ENCODE measurements at regions of chr3 and their contacts with region 1.

Region 1: DNA sequence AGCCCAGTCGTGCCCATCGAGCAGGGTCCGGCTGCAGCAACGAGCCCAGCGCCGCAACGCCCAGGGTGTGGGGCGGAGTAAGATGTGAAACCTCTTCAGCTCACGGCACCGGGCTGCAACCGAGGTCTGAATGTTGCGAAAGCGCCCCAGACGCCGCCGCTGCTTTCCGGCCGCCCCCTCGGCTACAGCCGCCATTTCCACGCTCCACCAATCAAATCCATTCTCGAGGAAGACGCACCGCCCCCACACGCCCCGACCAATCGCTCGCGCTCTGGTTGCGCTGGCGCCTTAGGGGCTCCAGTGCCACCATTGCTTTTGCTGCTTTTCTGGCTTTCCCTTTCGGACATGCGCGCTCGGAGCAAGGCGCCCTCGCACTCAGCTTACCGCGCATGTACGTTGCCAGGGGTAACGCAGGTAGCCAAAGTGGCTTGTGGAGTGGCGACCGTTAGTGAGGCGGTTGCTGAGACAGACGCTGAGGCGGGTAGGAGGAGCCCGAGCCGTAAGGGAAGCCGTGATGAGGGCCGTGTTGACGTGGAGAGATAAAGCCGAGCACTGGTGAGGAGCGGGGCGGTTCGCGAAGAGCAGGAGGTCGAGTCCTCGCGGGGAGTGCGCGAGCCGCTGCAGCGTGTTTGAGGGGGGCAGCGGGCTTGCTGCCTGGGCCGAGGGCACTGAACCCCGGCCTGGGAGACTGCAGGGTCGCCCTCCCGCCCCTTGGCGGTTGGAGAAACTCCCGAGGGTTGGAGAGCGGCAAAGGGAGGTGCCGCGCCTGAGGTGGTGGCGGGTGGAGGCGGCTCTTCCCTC is at the starts of genes IFT122 and MBD4:
- DNase-seq: peak; percentile 95 to 100 (median 99)
- ATAC-seq: peak; percentile 91
- H3K4me3 ChIP-seq: peak within 1 kb of the TSS; percentile 99
- H3K4me3 Mint-ChIP-seq: peak within 1 kb of the TSS; percentile 85 to 98 (median 94)
- H3K27ac ChIP-seq: peak within 1 kb of the TSS; percentile 95
- H3K27ac Mint-ChIP-seq: peak within 1 kb of the TSS; percentile 93 to 99 (median 97)
- H3K4me1 ChIP-seq: peaks cover 19 to 38% of the 10 kb centered on the region in 2 donors
- H3K4me1 Mint-ChIP-seq: peaks cover 52 to 88% (median 73%) of the 10 kb centered on the region in 7 donors
- H3K27me3 ChIP-seq: no peaks in the 10 kb centered on the region
- H3K27me3 Mint-ChIP-seq: no peaks in the 10 kb centered on the region
- total RNA-seq, gene IFT122: 16.6 to 25.2 (median 18.8) TPM
- total RNA-seq, gene MBD4: 37.9 to 56.6 (median 53.1) TPM

Region 2: DNA sequence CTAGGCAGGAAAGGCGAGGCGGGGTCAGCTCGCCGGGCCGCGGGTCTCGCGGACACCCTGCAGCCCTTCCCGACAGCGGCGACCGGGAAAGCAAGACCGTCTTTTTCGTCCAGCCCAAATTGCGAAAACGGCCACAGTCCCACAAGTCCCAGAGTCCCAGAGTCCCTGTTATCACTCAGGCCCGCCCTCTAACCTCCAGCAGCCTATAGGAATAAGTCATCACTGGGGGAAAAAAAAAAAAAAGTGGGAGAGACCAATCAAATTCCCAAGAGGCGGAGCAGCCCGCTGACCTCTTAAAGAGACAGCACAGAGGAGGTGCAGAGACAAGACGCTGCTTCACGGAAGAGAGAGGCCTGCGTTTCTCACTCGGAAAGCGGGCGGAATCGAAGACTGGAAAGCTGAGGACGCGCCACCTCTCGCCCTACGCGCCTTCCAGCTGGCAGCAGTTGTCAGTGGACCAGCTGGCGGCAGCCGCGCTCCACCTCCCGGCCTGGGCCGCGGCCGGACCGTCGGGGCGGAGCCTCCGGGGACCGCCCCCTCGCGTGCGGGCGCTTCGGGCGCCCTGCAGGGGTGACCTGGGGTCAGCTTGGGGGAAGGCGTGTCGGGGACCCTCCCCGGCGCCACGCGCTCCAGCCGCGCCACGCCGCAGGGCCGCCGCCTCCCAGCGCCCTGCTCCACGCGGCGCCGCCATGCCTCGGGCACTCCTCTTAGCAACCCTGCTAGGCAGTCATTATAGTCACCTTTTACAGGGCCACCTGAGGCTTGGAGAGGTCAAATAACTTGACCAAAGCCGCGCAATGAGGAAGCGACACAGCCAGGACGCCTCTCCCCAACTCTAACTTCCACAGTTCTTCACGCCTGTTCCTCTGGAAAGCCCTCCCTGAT is 1849.2 kb before region 1 on chr3 and contains the start of gene TPRA1:
- CTCF ChIA-PET with region 1: no interaction called
- POLR2A ChIA-PET with region 1: no interaction called
- intact Hi-C with region 1: loop called in 1 of 2 experiments (anchors 10 kb)
- DNase-seq: peak; percentile 58 to 90 (median 85)
- ATAC-seq: peak; percentile 90
- H3K4me3 ChIP-seq: peak within 1 kb of the TSS; percentile 91
- H3K4me3 Mint-ChIP-seq: peak within 1 kb of the TSS; percentile 86 to 99 (median 96)
- H3K27ac ChIP-seq: peak within 1 kb of the TSS; percentile 80
- H3K27ac Mint-ChIP-seq: peak within 1 kb of the TSS; percentile 86 to 96 (median 94)
- H3K4me1 ChIP-seq: peaks cover 11 to 12% of the 10 kb centered on the region in 2 donors
- H3K4me1 Mint-ChIP-seq: peaks cover 14 to 51% (median 43%) of the 10 kb centered on the region in 7 donors
- H3K27me3 ChIP-seq: no peaks in the 10 kb centered on the region
- H3K27me3 Mint-ChIP-seq: no peaks in the 10 kb centered on the region
- total RNA-seq, gene TPRA1: 13.6 to 30.6 (median 24.5) TPM

Region 3: DNA sequence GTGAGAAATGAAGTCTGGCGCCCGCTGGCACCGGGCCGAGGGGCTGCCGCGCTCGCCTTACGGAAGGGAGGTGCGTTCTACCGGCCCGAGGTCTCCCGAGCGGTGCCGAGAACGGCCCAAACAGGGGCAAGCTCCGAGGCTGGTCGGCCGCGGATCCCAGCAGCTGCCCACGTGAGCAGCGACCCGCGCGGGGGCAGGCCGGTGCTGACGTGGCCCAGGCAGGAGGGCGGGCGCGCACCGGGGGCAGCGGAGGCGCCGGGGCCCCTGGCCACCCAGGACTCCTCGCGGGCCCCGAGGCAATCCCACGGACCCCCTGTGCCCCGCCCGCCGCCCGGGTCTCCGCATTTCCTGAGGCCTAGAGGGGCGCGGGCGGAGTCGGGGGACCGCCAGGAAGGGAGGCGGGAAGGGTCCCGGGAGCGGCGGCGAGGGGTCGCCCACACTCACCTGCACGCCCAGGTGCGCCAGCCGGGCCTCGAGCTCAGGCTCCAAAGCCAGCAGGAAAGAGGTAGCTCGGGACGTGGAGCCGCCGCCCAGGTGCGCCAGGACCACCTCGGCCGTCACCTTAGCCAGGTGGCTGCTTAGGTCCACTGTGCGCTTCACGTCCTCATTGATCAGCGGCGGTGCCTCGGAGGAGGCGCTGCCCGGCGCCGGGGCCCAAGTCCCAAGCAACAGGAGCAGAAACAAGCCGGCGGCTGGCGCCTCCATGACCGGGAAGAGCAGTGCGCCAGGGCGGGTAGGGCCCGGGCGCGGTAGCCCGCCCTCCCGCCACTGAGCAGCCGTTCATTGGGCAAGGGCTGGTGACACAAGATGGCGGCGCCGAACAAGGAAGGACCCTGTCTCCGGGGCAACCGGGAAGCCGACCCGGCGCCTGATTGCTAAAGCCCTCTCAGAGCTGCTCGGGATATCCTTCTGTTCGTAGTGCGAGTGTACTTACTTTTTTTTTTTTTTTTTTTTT is 789.6 kb before region 1 on chr3 and contains the start of gene RPN1:
- CTCF ChIA-PET with region 1: no interaction called
- POLR2A ChIA-PET with region 1: no interaction called
- intact Hi-C with region 1: loop called in 1 of 2 experiments (anchors 1 kb)
- DNase-seq: peak; percentile 81 to 98 (median 97)
- ATAC-seq: peak; percentile 98
- H3K4me3 ChIP-seq: peak within 1 kb of the TSS; percentile 94
- H3K4me3 Mint-ChIP-seq: peak within 1 kb of the TSS; percentile 83 to 92 (median 90)
- H3K27ac ChIP-seq: peak within 1 kb of the TSS; percentile 99
- H3K27ac Mint-ChIP-seq: peak within 1 kb of the TSS; percentile 73 to 94 (median 92)
- H3K4me1 ChIP-seq: peaks cover 12 to 17% of the 10 kb centered on the region in 2 donors
- H3K4me1 Mint-ChIP-seq: peaks cover 25 to 43% (median 37%) of the 10 kb centered on the region in 7 donors
- H3K27me3 ChIP-seq: no peaks in the 10 kb centered on the region
- H3K27me3 Mint-ChIP-seq: no peaks in the 10 kb centered on the region
- total RNA-seq, gene RPN1: 76.7 to 203 (median 88.5) TPM

Region 4: GRCh38 chr3:128879125-128879969 is 560.7 kb before region 1 on chr3 and contains the start of gene ACAD9:
- CTCF ChIA-PET with region 1: no interaction called
- POLR2A ChIA-PET with region 1: interaction called, 3 read pairs
- intact Hi-C with region 1: loop called (anchors 1 kb)
- DNase-seq: peak; percentile 94 to 100 (median 96)
- ATAC-seq: peak; percentile 95
- H3K4me3 ChIP-seq: peak within 1 kb of the TSS; percentile 74
- H3K4me3 Mint-ChIP-seq: peak within 1 kb of the TSS; percentile 80 to 98 (median 89)
- H3K27ac ChIP-seq: peak within 1 kb of the TSS; percentile 97
- H3K27ac Mint-ChIP-seq: peak within 1 kb of the TSS; percentile 92 to 98 (median 97)
- H3K4me1 ChIP-seq: peaks cover 19 to 43% of the 10 kb centered on the region in 2 donors
- H3K4me1 Mint-ChIP-seq: peaks cover 40 to 83% (median 77%) of the 10 kb centered on the region in 7 donors
- H3K27me3 ChIP-seq: no peaks in the 10 kb centered on the region
- H3K27me3 Mint-ChIP-seq: peaks cover 0 to 6% (median 0%) of the 10 kb centered on the region in 5 donors
- total RNA-seq, gene ACAD9: 40.3 to 74.0 (median 63.0) TPM

Region 5: DNA sequence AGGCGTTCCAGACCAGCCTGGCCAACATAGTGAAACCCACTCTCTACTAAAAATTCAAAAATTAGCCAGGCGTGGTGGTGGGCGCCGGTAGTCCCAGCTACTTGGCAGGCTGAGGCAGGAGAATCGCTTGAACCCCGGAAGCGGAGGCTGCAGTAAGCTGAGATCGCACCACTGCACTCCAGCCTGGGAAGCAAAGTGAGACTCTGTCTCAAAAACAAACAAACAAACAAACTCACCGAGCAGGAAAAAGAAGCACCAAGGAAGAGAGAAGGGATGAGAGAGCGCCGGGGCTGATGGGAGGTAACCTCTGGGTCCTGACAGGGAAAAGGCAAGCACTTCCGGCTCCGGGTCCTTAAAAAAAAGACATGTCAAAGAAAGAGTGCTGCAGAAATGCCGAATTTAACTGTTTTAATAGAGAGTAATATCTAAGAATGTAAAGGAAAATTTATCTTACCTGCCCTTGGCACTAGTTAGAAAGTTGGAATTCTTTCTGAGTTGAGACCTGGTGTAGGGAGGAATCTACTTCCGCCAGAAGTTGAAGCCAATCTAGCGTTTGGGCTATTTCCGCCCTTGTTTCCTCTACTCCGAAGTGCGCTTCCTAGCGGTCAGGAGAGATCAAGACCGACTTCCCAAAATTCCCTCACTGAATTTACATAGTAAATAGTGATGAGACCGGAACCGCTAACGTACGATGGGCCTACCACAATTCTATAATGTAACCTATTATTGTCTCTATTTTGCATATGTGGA is 40.7 kb before region 1 on chr3:
- CTCF ChIA-PET with region 1: interaction called, 4 read pairs
- POLR2A ChIA-PET with region 1: interaction called, 6 read pairs
- intact Hi-C with region 1: loop called (anchors 1 kb)
- DNase-seq: peak; percentile 34 to 89 (median 81)
- ATAC-seq: peak; percentile 91
- H3K4me3 ChIP-seq: peak overlapping the region; percentile 70
- H3K4me3 Mint-ChIP-seq: peak overlapping the region; percentile 89 to 100 (median 97)
- H3K27ac ChIP-seq: peak overlapping the region; percentile 88
- H3K27ac Mint-ChIP-seq: peak overlapping the region; percentile 94 to 100 (median 98)
- H3K4me1 ChIP-seq: peaks cover 10 to 13% of the 10 kb centered on the region in 2 donors
- H3K4me1 Mint-ChIP-seq: peaks cover 23 to 47% (median 37%) of the 10 kb centered on the region in 7 donors
- H3K27me3 ChIP-seq: no peaks in the 10 kb centered on the region
- H3K27me3 Mint-ChIP-seq: no peaks in the 10 kb centered on the region

Region 6: GRCh38 chr3:129593595-129594339 is 153.8 kb after region 1 on chr3:
- CTCF ChIA-PET with region 1: no interaction called
- POLR2A ChIA-PET with region 1: interaction called, 10 read pairs
- intact Hi-C with region 1: no loop called
- DNase-seq: peak in 7 of 9 donors; percentile 30 to 65 (median 51)
- ATAC-seq: peak; percentile 68
- H3K4me3 ChIP-seq: peak overlapping the region; percentile 12
- H3K4me3 Mint-ChIP-seq: peak overlapping the region; percentile 62 to 81 (median 75)
- H3K27ac ChIP-seq: no peak overlapping the region
- H3K27ac Mint-ChIP-seq: peak overlapping the region; percentile 53 to 89 (median 71)
- H3K4me1 ChIP-seq: peaks cover 20 to 28% of the 10 kb centered on the region in 2 donors
- H3K4me1 Mint-ChIP-seq: peaks cover 14 to 38% (median 30%) of the 10 kb centered on the region in 7 donors
- H3K27me3 ChIP-seq: no peaks in the 10 kb centered on the region
- H3K27me3 Mint-ChIP-seq: peaks cover 0 to 57% (median 5%) of the 10 kb centered on the region in 5 donors

Region 7: GRCh38 chr3:130746246-130747039 is 1306.4 kb after region 1 on chr3 and contains the start of gene PIK3R4:
- CTCF ChIA-PET with region 1: no interaction called
- POLR2A ChIA-PET with region 1: no interaction called
- intact Hi-C with region 1: loop called (anchors 2 to 5 kb)
- DNase-seq: peak; percentile 79 to 98 (median 92)
- ATAC-seq: peak; percentile 87
- H3K4me3 ChIP-seq: peak within 1 kb of the TSS; percentile 87
- H3K4me3 Mint-ChIP-seq: peak within 1 kb of the TSS in 9 of 10 donors; percentile 82 to 97 (median 93)
- H3K27ac ChIP-seq: peak within 1 kb of the TSS; percentile 89
- H3K27ac Mint-ChIP-seq: peak within 1 kb of the TSS; percentile 89 to 99 (median 94)
- H3K4me1 ChIP-seq: peaks cover 5 to 20% of the 10 kb centered on the region in 2 donors
- H3K4me1 Mint-ChIP-seq: peaks cover 35 to 62% (median 50%) of the 10 kb centered on the region in 7 donors
- H3K27me3 ChIP-seq: no peaks in the 10 kb centered on the region
- H3K27me3 Mint-ChIP-seq: peaks cover 0 to 3% (median 0%) of the 10 kb centered on the region in 5 donors
- total RNA-seq, gene PIK3R4: 15.5 to 33.6 (median 27.3) TPM